ENCODE measurements at regions of chrX and their contacts with region 1.

Region 1: DNA sequence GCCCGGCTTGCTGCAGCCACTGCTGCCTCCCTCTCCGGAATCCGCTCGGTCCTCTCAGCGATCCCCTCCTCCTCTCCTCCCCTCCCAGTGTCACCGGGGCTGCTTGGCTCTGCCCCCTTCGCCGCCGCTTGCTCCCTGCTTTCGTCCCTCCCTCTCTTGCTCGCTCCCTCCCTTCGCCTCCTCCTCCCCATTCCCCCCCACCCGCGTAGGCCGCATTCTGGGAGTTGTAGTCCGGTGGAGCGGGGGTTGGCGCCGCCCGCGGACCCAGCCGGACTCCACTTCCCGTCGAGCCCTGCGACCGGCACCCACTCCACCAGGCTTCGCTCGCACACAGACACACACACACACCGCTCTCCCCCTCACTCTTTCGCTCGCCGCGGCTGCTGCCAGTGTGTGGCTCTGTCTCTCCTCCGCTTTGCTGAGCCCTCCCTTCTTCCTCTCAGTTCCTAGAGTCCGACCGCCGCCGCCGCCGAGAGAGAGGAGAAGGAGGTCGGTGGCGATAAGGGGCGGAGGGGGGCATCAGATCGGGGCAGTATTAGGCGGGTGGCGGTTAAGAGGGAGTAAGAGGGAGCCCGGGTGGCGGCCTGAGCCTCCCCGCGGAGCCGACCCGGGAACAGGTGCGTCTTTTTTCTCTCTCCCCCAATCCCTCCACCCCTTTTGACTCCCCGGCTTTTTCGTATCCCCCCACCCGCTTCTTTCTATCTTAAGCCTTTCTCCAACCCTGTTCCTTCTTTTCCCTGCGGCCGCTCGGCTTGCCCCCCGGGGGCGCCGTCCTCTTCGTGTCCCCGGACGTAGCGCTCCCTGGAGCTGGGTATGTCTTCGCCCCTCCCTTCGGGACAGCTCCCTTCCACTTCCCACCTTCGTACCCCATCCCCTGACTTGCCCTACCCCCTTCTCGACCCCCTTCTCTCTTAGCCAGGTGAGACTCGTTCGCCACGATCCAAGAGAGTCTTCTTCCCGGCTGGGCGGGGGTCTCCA is at the start of gene BCORL1:
- DNase-seq: peak; percentile 76 to 95 (median 85)
- ATAC-seq: peak; percentile 88
- H3K4me3 ChIP-seq: peak within 1 kb of the TSS in 1 of 2 experiments; percentile 59
- H3K4me3 Mint-ChIP-seq: no peak within 1 kb of the TSS
- H3K27ac ChIP-seq: peak within 1 kb of the TSS; percentile 27 to 46
- H3K27ac Mint-ChIP-seq: peak within 1 kb of the TSS; percentile 71
- H3K4me1 ChIP-seq: peaks cover 4% of the 10 kb centered on the region
- H3K4me1 Mint-ChIP-seq: peaks cover 27% of the 10 kb centered on the region
- H3K27me3 ChIP-seq: no peaks in the 10 kb centered on the region
- H3K27me3 Mint-ChIP-seq: no peaks in the 10 kb centered on the region
- CTCF ChIP-seq: no peak
- total RNA-seq, gene BCORL1: 2.1 to 2.4 TPM

Region 2: GRCh38 chrX:129772796-129773431 is 209.6 kb before region 1 on chrX:
- CTCF ChIA-PET with region 1: no interaction called
- POLR2A ChIA-PET with region 1: interaction called, 3 read pairs
- intact Hi-C with region 1: loop called in 1 of 2 experiments (anchors 10 kb)
- DNase-seq: peak in 5 of 9 experiments; percentile 39 to 83 (median 54)
- ATAC-seq: no peak
- H3K4me3 ChIP-seq: no peak overlapping the region
- H3K4me3 Mint-ChIP-seq: peak overlapping the region; percentile 54
- H3K27ac ChIP-seq: peak overlapping the region in 1 of 2 experiments; percentile 75
- H3K27ac Mint-ChIP-seq: peak overlapping the region; percentile 95
- H3K4me1 ChIP-seq: peaks cover 85% of the 10 kb centered on the region
- H3K4me1 Mint-ChIP-seq: peaks cover 77% of the 10 kb centered on the region
- H3K27me3 ChIP-seq: no peaks in the 10 kb centered on the region
- H3K27me3 Mint-ChIP-seq: no peaks in the 10 kb centered on the region
- CTCF ChIP-seq: no peak

Region 3: DNA sequence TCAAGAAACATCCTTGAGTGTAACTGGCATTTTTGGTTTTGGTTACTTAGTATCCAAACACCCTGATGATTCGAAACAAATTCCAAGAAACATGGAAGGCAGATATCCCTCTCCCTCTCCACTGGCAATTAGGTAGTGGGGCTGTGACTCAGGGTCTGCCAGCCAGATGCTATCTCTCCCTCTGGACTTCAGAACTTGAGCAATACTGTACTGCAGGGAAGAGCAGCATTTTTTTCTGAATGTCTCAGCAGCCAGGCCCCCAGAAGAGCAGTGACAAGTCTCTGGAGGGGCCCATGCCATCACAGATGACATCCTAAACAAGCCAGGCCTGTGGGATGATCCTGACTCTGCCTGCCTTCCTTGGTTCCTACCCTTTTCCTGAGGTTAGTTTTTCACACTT is 37.4 kb before region 1 on chrX:
- CTCF ChIA-PET with region 1: no interaction called
- POLR2A ChIA-PET with region 1: no interaction called
- intact Hi-C with region 1: no loop called
- DNase-seq: no peak
- ATAC-seq: no peak
- H3K4me3 ChIP-seq: no peak overlapping the region
- H3K4me3 Mint-ChIP-seq: no peak overlapping the region
- H3K27ac ChIP-seq: no peak overlapping the region
- H3K27ac Mint-ChIP-seq: no peak overlapping the region
- H3K4me1 ChIP-seq: no peaks in the 10 kb centered on the region
- H3K4me1 Mint-ChIP-seq: peaks cover 2% of the 10 kb centered on the region
- H3K27me3 ChIP-seq: no peaks in the 10 kb centered on the region
- H3K27me3 Mint-ChIP-seq: no peaks in the 10 kb centered on the region
- CTCF ChIP-seq: no peak

Region 4: DNA sequence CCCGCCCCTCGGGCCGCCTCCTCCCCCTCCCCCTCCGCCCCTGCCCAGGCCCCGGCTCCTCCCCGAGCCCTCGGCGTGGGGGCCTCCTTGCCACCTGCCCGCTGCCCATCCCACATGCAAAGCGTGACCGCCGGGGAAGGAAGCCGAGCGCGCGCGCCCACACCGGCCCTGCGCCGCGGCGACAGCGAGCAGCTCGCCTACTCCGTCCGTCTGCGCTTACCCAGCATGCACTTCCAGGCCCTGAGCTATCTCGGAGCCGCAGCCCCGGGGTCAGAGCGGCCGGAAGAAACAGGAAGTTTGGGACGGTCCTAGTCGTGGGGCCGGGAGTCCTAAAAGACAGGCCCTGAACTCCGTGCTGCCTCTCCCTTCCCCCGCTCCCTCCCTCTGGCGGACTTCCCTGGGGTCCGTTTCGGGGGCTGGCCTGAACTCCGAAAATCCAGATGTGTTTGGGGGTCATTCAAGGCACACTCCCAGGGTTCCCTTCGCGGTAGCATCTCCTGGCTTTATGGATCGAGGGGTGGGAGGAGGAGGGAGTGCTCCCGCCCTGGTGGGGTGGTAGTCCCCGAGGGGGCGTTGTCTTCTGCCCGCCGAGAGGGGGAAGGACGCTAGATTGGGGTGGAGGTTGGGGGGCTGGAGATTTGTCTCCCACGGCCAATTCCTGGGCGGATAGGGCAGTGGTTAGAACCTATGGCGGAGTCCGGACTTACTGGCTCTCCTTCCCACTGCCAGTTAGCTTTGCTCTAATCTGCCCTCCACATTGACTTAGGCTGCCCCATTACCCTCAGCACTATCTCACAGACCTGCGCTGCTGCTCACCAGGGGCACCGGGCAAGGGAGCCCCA is 25.1 kb before region 1 on chrX:
- CTCF ChIA-PET with region 1: no interaction called
- POLR2A ChIA-PET with region 1: interaction called, 9 read pairs
- intact Hi-C with region 1: loop called (anchors 1 to 2 kb)
- DNase-seq: peak in 3 of 9 experiments; percentile 3 to 59 (median 52)
- ATAC-seq: peak; percentile 12
- H3K4me3 ChIP-seq: peak overlapping the region; percentile 43 to 49
- H3K4me3 Mint-ChIP-seq: peak overlapping the region; percentile 69
- H3K27ac ChIP-seq: peak overlapping the region; percentile 23 to 49
- H3K27ac Mint-ChIP-seq: peak overlapping the region; percentile 55
- H3K4me1 ChIP-seq: peaks cover 22% of the 10 kb centered on the region
- H3K4me1 Mint-ChIP-seq: peaks cover 37% of the 10 kb centered on the region
- H3K27me3 ChIP-seq: no peaks in the 10 kb centered on the region
- H3K27me3 Mint-ChIP-seq: no peaks in the 10 kb centered on the region
- CTCF ChIP-seq: no peak

Region 5: DNA sequence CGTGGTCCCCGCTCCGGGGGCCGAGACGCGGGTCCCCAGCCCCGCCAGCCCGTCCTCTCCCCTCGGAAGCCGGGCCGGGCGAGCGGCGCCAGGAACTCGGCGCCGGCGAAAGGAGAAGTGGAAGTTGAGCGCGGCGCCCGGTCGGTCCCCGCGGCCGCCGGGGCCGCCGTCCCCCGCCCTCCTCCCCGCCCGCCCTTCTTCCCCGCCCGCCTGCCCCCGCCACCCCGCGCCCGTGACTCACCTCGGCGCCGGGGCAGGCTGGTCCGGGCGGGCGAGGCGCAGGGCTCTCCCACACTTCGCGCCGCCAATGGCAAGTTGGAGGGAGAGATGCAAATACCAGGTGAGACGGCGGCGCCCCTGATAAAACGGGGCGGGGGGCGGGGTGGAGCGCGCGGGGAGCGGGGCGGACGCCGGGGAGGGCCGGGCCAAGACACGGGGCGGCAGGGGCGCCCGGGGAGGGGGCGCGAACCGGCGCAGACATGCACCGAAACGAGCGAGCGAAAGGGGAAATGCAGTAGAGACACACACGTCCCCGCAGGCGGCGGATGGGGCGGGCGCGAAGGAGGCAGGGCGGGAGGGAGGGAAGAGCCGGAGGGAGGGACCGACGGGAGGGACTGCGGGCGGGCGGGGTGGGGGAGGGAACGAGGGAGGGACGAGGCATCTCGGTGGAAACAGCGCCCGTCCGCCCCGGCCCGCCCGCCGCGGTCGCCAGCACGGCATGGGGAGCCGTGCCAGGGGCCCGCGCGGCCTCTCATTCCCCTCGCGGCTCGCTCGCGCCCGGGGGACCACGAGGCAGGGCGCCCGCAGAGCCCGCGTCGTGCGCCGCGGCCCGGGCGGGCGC is 128.0 kb after region 1 on chrX and contains the start of gene ELF4:
- CTCF ChIA-PET with region 1: no interaction called
- POLR2A ChIA-PET with region 1: no interaction called
- intact Hi-C with region 1: loop called in 1 of 2 experiments (anchors 5 kb)
- DNase-seq: peak in 8 of 9 experiments; percentile 38 to 83 (median 65)
- ATAC-seq: peak; percentile 75
- H3K4me3 ChIP-seq: peak within 1 kb of the TSS; percentile 54 to 58
- H3K4me3 Mint-ChIP-seq: peak within 1 kb of the TSS; percentile 87
- H3K27ac ChIP-seq: peak within 1 kb of the TSS; percentile 35 to 73
- H3K27ac Mint-ChIP-seq: peak within 1 kb of the TSS; percentile 94
- H3K4me1 ChIP-seq: peaks cover 10% of the 10 kb centered on the region
- H3K4me1 Mint-ChIP-seq: peaks cover 30% of the 10 kb centered on the region
- H3K27me3 ChIP-seq: no peaks in the 10 kb centered on the region
- H3K27me3 Mint-ChIP-seq: no peaks in the 10 kb centered on the region
- CTCF ChIP-seq: no peak
- total RNA-seq, gene ELF4: 11.7 to 13.8 TPM

Region 6: DNA sequence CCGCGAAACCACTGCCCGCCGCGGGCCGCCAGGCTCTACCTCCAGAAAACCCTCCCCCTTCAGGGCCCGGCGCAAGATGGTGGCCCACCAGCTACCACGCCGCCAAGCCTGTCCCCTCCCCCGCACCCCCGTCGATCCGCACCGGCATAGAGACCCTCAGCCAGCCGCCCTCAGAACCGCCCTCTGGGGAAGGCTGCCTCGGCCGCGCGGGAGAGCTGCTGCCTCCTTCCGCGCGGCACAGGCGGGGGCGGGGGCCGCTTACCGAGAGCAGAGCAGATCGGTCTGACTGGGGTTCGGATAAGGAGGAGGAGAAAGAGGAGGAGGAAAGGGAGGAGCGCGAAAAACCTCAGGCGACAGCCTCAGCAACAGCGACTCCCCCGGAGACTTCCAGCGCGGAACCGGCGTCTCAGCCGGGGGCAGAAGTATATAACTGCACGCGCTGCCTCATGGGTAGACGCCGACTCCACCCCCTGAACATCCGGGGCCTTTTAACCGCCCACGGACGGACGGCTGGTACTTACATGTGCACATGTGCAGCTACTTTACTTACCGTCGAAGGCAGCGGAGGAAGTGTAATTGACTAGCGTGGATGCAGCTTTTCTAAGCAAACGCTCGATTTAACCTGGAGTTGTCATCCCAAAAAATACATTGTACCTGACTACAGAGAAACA is 286.1 kb after region 1 on chrX and contains the start of gene ZNF280C:
- CTCF ChIA-PET with region 1: no interaction called
- POLR2A ChIA-PET with region 1: no interaction called
- intact Hi-C with region 1: loop called in 1 of 2 experiments (anchors 5 kb)
- DNase-seq: peak; percentile 76 to 94 (median 88)
- ATAC-seq: peak; percentile 94
- H3K4me3 ChIP-seq: peak within 1 kb of the TSS; percentile 73 to 74
- H3K4me3 Mint-ChIP-seq: peak within 1 kb of the TSS; percentile 88
- H3K27ac ChIP-seq: peak within 1 kb of the TSS; percentile 54 to 65
- H3K27ac Mint-ChIP-seq: peak within 1 kb of the TSS; percentile 85
- H3K4me1 ChIP-seq: peaks cover 14% of the 10 kb centered on the region
- H3K4me1 Mint-ChIP-seq: peaks cover 13% of the 10 kb centered on the region
- H3K27me3 ChIP-seq: no peaks in the 10 kb centered on the region
- H3K27me3 Mint-ChIP-seq: no peaks in the 10 kb centered on the region
- CTCF ChIP-seq: no peak
- total RNA-seq, gene ZNF280C: 4.4 to 5.2 TPM

Measured in CD8-positive, alpha-beta T cell (primary cell).